Calu3 (cell line): ENCODE measurements at regions of chrX and their contacts with region 1.

Region 1: GRCh38 chrX:11100281-11101035 is 10.7 kb upstream of the HCCS start:
- DNase-seq: peak; percentile 34
- H3K4me3 Mint-ChIP-seq: no peak overlapping the region
- H3K27ac Mint-ChIP-seq: peak overlapping the region; percentile 20
- H3K4me1 Mint-ChIP-seq: peaks cover 8% of the 10 kb centered on the region
- H3K27me3 Mint-ChIP-seq: no peaks in the 10 kb centered on the region
- CTCF ChIP-seq: no peak

Region 2: GRCh38 chrX:9988762-9989161 is 1111.7 kb before region 1 on chrX:
- CTCF ChIA-PET with region 1: no interaction called
- intact Hi-C with region 1: loop called (anchors 10 kb)
- DNase-seq: no peak
- H3K4me3 Mint-ChIP-seq: no peak overlapping the region
- H3K27ac Mint-ChIP-seq: no peak overlapping the region
- H3K4me1 Mint-ChIP-seq: no peaks in the 10 kb centered on the region
- H3K27me3 Mint-ChIP-seq: no peaks in the 10 kb centered on the region
- CTCF ChIP-seq: peak; percentile 42

Region 3: DNA sequence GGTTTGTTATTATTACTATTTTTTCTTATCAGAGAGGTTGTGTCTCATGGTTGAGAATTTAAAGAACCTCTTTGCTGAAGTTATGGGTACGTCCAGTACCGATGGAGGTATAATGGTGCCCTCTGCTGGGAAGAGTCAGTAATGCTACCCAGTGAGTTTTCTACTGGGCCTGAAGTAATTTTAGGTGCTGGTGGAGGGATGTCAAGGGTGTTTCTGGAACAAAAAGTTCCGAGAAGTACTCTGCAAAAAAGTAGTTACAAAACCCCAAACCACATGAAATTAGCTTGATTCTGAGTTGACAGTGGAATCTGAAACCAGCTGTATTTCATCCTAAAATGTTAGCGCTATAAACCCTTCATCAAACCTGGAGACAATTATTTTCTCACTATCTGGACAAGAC is 377.6 kb before region 1 on chrX:
- CTCF ChIA-PET with region 1: interaction called, 4 read pairs
- intact Hi-C with region 1: loop called (anchors 10 kb)
- DNase-seq: peak; percentile 66
- H3K4me3 Mint-ChIP-seq: no peak overlapping the region
- H3K27ac Mint-ChIP-seq: no peak overlapping the region
- H3K4me1 Mint-ChIP-seq: peaks cover 6% of the 10 kb centered on the region
- H3K27me3 Mint-ChIP-seq: no peaks in the 10 kb centered on the region
- CTCF ChIP-seq: no peak

Region 4: DNA sequence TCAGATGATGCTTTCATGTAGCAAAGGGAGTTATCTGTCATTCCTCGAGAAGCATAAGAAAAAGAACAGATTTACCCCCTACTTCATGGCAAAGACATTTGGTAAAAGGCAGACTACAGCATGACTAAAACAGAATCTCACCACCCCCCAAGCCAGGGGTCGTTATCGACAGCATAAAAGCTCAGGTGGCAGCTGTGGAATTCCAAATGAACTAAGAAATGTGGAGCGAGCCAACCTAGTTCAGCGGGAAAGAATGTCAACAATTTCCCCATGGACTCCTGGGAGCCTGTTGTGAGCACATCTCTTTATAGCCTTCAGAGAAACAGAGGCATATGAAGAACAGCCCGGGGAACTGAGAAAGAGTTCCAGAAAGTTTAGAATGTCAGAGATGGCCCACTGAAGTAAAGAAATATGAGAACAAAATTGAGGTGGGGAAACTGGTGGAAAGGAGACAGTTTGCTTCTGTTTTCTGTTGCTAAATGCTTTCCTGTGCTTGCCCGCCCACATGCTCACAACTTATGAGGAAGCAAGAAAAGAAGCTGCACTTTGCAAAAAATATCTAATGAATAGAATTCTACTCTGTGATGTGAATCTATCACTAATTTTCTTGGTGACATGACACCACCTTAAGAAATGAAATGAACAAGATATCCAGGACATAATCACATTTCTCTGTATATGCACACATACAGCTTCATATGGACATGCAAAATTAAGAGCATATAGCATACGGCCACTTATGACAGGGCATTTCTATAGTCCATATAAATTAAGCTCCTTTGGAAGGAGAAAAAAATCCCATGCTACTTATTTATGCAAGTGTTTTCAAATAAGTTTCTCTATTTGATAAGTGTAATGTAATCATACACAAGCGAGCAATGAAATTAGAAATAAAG is 344.8 kb before region 1 on chrX:
- CTCF ChIA-PET with region 1: interaction called, 10 read pairs
- intact Hi-C with region 1: loop called (anchors 1 kb)
- DNase-seq: peak; percentile 6
- H3K4me3 Mint-ChIP-seq: no peak overlapping the region
- H3K27ac Mint-ChIP-seq: peak overlapping the region; percentile 23
- H3K4me1 Mint-ChIP-seq: peaks cover 23% of the 10 kb centered on the region
- H3K27me3 Mint-ChIP-seq: no peaks in the 10 kb centered on the region
- CTCF ChIP-seq: no peak

Region 5: DNA sequence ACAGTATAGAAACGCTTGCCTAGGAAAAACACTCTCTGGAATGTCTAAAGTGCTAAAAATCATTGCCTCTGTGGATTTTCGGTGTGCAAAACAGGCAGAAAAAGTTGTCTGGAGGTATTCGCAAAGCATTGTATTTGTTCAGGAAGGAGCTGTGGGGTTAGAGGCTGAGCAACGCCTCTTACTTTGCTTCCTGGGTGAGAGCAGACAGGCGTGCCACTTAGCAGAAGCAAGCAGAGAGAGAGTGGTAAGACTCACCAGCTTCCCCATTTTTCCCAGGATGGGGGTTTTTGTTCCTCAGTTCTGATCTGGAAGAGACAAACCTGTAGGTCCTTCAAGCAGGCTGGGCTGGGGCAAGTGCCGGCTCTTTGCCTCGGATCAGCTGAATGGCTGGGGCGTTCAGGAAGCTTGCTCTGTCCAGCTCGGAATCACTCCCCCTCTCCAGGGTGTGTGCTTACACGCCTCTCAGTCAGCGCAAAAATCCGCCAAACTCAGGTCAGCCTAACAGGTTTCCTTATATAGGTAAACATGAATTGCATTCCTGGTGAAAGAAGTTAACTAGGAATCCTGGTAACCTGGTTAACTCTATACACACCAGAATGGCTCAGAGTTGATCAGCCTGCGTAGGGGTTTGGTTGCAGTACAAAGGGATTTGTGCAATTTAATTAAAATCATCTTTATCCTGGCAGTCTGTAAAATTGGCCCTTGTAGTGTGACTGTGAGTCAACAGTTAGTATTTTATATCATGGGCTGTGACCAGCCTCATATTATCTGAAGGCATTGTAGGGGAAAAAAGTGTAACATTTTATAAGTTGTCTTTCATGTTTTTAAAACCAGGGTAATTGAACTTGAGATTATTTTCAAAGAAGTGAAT is 266.9 kb before region 1 on chrX:
- CTCF ChIA-PET with region 1: no interaction called
- intact Hi-C with region 1: loop called (anchors 1 kb)
- DNase-seq: peak; percentile 74
- H3K4me3 Mint-ChIP-seq: peak overlapping the region; percentile 76
- H3K27ac Mint-ChIP-seq: peak overlapping the region; percentile 71
- H3K4me1 Mint-ChIP-seq: peaks cover 5% of the 10 kb centered on the region
- H3K27me3 Mint-ChIP-seq: no peaks in the 10 kb centered on the region
- CTCF ChIP-seq: no peak

Region 6: GRCh38 chrX:10859353-10859752 is 241.1 kb before region 1 on chrX:
- CTCF ChIA-PET with region 1: no interaction called
- intact Hi-C with region 1: no loop called
- DNase-seq: no peak
- H3K4me3 Mint-ChIP-seq: no peak overlapping the region
- H3K27ac Mint-ChIP-seq: no peak overlapping the region
- H3K4me1 Mint-ChIP-seq: no peaks in the 10 kb centered on the region
- H3K27me3 Mint-ChIP-seq: no peaks in the 10 kb centered on the region
- CTCF ChIP-seq: no peak

Region 7: GRCh38 chrX:10900585-10901289 is 199.7 kb before region 1 on chrX:
- CTCF ChIA-PET with region 1: no interaction called
- intact Hi-C with region 1: loop called (anchors 1 kb)
- DNase-seq: peak; percentile 13
- H3K4me3 Mint-ChIP-seq: peak overlapping the region; percentile 37
- H3K27ac Mint-ChIP-seq: peak overlapping the region; percentile 82
- H3K4me1 Mint-ChIP-seq: peaks cover 19% of the 10 kb centered on the region
- H3K27me3 Mint-ChIP-seq: no peaks in the 10 kb centered on the region
- CTCF ChIP-seq: no peak